Esophagus squamous epithelium (tissue), 5 donors: ENCODE measurements at regions of chr16 and their contacts with region 1.

Region 1: GRCh38 chr16:4200000-4200780 is 41.7 kb downstream of the SRL start:
- DNase-seq: no peak
- H3K4me3 ChIP-seq: no peak overlapping the region
- H3K27ac ChIP-seq: no peak overlapping the region
- H3K4me1 ChIP-seq: peaks cover 0 to 9% (median 8%) of the 10 kb centered on the region in 3 donors
- H3K27me3 ChIP-seq: no peaks in the 10 kb centered on the region
- CTCF ChIP-seq: peak in 5 of 6 experiments; percentile 62 to 91 (median 74)
- POLR2A ChIP-seq: no peak

Region 2: GRCh38 chr16:4067262-4068001 is 132.8 kb before region 1 on chr16:
- intact Hi-C with region 1: no loop called
- DNase-seq: no peak
- H3K4me3 ChIP-seq: no peak overlapping the region
- H3K27ac ChIP-seq: no peak overlapping the region
- H3K4me1 ChIP-seq: peaks cover 0 to 4% (median 0%) of the 10 kb centered on the region in 3 donors
- H3K27me3 ChIP-seq: no peaks in the 10 kb centered on the region
- CTCF ChIP-seq: no peak
- POLR2A ChIP-seq: no peak

Region 3: GRCh38 chr16:4244254-4245076 is 44.3 kb after region 1 on chr16:
- intact Hi-C with region 1: loop called (anchors 5 kb)
- DNase-seq: no peak
- H3K4me3 ChIP-seq: no peak overlapping the region
- H3K27ac ChIP-seq: no peak overlapping the region
- H3K4me1 ChIP-seq: no peaks in the 10 kb centered on the region
- H3K27me3 ChIP-seq: no peaks in the 10 kb centered on the region
- CTCF ChIP-seq: no peak
- POLR2A ChIP-seq: no peak